ENCODE measurements at regions of chr5 and their contacts with region 1.

Region 1: GRCh38 chr5:149434162-149435014 is 55.3 kb upstream of the IL17B start:
- DNase-seq: peak; percentile 76
- H3K4me3 ChIP-seq: no peak overlapping the region
- H3K27ac ChIP-seq: peak overlapping the region; percentile 84
- H3K27me3 ChIP-seq: no peaks in the 10 kb centered on the region
- CTCF ChIP-seq: peak; percentile 91

Region 2: GRCh38 chr5:149326611-149327010 is 107.8 kb before region 1 on chr5:
- CTCF ChIA-PET with region 1: no interaction called
- POLR2A ChIA-PET with region 1: interaction called, 10 read pairs
- DNase-seq: no peak
- H3K4me3 ChIP-seq: no peak overlapping the region
- H3K27ac ChIP-seq: no peak overlapping the region
- H3K27me3 ChIP-seq: no peaks in the 10 kb centered on the region
- CTCF ChIP-seq: no peak

Region 3: DNA sequence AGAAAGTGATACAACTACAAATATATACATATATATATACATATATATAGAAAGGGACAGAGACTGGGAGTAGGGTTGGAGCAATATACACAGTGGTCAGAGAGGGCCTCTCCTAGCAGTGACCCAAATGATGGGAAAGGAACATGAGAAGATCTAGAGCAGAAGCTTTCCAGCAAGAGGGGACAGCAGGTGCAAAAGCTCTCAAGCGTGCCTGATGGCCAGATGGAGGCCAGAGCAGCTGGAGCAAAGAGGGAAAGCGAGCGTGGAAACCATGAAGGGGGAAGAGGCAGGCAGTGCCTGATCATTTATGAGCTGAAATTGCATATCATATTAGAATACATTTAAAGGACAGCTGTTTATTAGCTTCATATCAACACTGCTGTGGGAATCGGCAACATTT is 96.7 kb before region 1 on chr5:
- CTCF ChIA-PET with region 1: no interaction called
- POLR2A ChIA-PET with region 1: no interaction called
- DNase-seq: no peak
- H3K4me3 ChIP-seq: no peak overlapping the region
- H3K27ac ChIP-seq: no peak overlapping the region
- H3K27me3 ChIP-seq: no peaks in the 10 kb centered on the region
- CTCF ChIP-seq: no peak

Region 4: DNA sequence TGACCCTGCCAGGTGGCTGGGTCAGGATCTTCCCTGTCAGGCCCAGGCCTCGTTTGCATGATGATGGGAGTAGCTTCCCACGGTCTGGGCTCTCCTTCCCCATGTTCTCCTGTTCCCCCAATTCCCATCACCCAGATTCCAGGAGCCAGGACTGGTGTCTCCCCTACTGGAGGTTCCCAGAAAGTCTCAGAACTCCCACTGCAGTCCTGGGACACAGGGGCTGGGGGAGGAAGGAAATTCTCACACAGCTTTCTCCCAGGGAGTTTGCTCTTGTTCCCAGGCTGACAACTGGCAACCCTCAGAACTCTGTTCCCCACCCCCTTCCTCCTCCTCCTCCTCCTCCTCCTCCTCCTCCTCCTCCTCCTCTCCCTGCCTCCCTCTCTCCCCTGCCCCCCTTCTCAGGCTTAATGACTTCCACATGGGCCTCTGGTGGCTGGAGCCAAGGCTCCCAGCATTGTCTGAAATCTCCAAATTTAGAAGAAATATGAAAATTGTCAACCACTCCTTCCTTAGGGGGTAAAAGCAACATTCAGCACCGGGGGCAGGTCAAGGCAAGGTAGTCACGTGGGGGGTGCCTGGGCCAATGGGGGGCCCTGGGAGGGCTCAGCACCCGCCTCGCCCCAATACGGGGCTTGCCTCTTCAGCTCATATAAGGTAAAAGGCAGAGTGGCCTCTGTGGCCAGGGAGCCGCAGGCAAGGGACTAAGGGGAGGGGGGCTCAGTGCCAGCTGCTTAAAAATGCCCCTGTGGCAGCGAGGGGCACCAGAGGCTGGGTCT is 28.0 kb before region 1 on chr5:
- CTCF ChIA-PET with region 1: interaction called, 11 read pairs
- POLR2A ChIA-PET with region 1: interaction called, 8 read pairs
- DNase-seq: peak; percentile 88
- H3K4me3 ChIP-seq: peak overlapping the region; percentile 75
- H3K27ac ChIP-seq: peak overlapping the region; percentile 95
- H3K27me3 ChIP-seq: no peaks in the 10 kb centered on the region
- CTCF ChIP-seq: peak; percentile 34

Region 5: DNA sequence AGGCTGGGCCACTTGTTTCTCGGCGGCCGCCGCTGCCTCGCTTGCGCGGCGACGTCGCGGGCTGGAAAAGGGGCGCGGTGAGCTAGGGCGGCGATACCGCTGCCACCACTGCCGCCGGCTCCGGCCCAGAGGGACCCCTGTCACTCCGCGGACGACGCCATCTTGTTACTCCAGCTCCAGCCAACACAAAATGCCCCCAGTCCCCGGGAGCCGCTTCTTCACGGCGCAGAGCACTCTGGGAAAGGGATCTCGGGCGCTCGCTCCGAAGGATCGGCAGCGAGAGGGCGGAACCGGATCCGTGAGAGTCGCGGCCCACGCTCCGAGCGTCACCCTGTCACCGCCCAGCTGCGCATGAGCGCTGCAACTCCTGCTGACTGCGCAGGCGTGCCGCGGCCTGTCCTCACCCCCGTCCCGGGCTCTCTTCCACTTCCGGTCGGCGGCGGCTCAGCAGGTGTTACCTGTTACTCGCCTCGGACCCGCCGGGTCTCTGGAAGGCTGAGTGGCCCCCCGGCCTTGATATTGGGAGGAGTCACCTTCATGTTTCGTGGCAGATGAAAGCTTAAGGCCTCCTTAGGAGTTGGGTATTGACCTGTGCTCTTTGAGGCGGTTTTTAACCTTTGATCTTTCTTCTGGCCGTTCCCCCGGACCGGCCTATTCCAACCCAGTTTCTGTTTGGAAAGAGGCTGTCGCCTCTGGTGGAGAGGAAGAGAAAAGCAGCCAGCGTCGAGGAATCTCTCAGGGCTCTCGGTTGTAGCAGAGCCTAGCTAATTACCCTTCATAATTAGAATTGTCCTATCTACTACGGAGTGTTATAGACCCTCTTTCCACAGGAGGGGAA is 117.0 kb after region 1 on chr5 and contains the start of gene CSNK1A1:
- CTCF ChIA-PET with region 1: interaction called, 17 read pairs
- POLR2A ChIA-PET with region 1: interaction called, 23 read pairs
- DNase-seq: peak; percentile 97
- H3K4me3 ChIP-seq: peak within 1 kb of the TSS; percentile 96
- H3K27ac ChIP-seq: peak within 1 kb of the TSS; percentile 91
- H3K27me3 ChIP-seq: no peaks in the 10 kb centered on the region
- CTCF ChIP-seq: peak; percentile 86
- polyA plus RNA-seq, gene CSNK1A1: 260 and 329 TPM in 2 replicates

Region 6: GRCh38 chr5:149567226-149567625 is 132.8 kb after region 1 on chr5:
- CTCF ChIA-PET with region 1: interaction called, 48 read pairs
- POLR2A ChIA-PET with region 1: interaction called, 12 read pairs
- DNase-seq: no peak
- H3K4me3 ChIP-seq: no peak overlapping the region
- H3K27ac ChIP-seq: no peak overlapping the region
- H3K27me3 ChIP-seq: no peaks in the 10 kb centered on the region
- CTCF ChIP-seq: no peak